Activated T-helper 2 cell treated with anti-CD3 and anti-CD28 coated beads, Interferon-gamma antibody, Interleukin-2, Interleukin-4, amounts not matched to agents 10 μg/mL and 5 μg/mL and 100 μg/mL, durations not matched to agents 14 hours and 24 hours and 36 hours (primary cell): ENCODE measurements at regions of chr9 and their contacts with region 1.

Region 1: GRCh38 chr9:130017076-130017475 is 25.9 kb downstream of the FNBP1 start:
- DNase-seq: no peak
- H3K4me3 Mint-ChIP-seq: peak overlapping the region; percentile 51
- H3K27ac Mint-ChIP-seq: peak overlapping the region; percentile 99
- H3K4me1 Mint-ChIP-seq: peaks cover 49% of the 10 kb centered on the region
- H3K27me3 Mint-ChIP-seq: no peaks in the 10 kb centered on the region

Region 2: DNA sequence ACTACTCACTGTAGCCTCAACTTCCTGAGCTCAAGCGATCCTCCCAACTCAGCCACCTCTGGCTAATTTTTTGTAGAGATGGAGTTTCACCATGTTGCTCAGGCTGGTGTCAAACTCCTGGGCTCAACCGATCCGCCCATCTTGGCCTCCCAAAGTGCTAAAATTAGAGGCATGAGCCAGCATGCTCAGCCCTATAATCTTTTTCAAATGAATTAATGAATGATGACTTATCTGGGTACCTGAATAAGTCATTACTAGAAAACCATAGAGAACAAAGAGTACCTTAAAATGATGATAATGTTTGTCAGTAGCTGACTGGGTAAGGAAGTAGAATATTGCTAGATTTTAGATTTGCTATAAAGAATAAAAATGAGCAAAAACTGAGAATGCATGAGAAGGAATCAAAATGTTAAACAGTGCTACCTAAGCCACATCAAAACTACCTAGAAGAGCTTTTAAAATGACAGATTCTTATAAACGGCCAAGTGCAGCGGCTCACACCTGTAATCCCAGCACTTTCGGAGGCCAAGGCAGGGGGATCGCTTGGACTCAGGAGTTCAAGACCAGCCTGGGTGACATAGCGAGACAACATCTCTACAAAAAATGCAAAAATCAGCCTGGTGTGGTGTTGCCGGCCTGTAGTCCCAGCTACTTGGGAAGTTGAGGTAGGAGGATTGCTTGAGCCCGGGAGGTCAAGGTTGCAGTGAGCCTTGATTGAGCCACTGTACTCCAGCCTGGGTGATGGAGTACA is 12.3 kb after region 1 on chr9:
- intact Hi-C with region 1: loop called (anchors 1 kb)
- DNase-seq: no peak
- H3K4me3 Mint-ChIP-seq: peak overlapping the region; percentile 65
- H3K27ac Mint-ChIP-seq: peak overlapping the region; percentile 95
- H3K4me1 Mint-ChIP-seq: peaks cover 85% of the 10 kb centered on the region
- H3K27me3 Mint-ChIP-seq: no peaks in the 10 kb centered on the region

Region 3: GRCh38 chr9:130034570-130034969 is 17.5 kb after region 1 on chr9:
- intact Hi-C with region 1: loop called (anchors 1 kb)
- DNase-seq: no peak
- H3K4me3 Mint-ChIP-seq: peak overlapping the region; percentile 38
- H3K27ac Mint-ChIP-seq: peak overlapping the region; percentile 93
- H3K4me1 Mint-ChIP-seq: peaks cover 75% of the 10 kb centered on the region
- H3K27me3 Mint-ChIP-seq: no peaks in the 10 kb centered on the region

Region 4: GRCh38 chr9:130265431-130266235 is 248.6 kb after region 1 on chr9 and contains the start of gene HMCN2:
- intact Hi-C with region 1: no loop called
- DNase-seq: no peak
- H3K4me3 Mint-ChIP-seq: no peak within 1 kb of the TSS
- H3K27ac Mint-ChIP-seq: no peak within 1 kb of the TSS
- H3K4me1 Mint-ChIP-seq: no peaks in the 10 kb centered on the region
- H3K27me3 Mint-ChIP-seq: peaks cover 63% of the 10 kb centered on the region
- total RNA-seq, gene HMCN2: not detected in 2 replicates